ENCODE measurements at regions of chr7 and their contacts with region 1.

Region 1: DNA sequence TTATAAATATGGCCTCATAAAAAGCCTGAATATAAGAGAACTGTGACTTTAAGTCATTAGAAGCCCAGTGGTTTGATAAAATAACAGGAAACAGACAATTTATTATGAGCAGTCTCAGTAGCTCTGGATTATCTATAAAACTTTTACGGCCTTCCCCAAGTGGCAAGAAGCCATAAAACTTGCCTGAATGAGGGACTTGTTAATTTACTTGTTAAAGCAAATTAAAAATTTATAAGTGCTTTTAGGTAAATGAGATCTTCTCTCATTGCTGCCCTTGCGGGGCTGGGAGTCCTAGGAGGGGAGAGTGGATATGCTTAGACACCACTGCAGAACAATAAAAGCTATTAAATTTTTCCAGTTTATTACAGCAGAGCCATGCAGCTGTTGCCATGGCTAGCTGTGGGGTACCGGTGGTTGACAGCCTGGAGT is 499.9 kb downstream of the AUTS2 start:
- DNase-seq: no peak
- ATAC-seq: no peak
- H3K4me3 ChIP-seq: no peak overlapping the region
- H3K27ac ChIP-seq: no peak overlapping the region
- H3K4me1 ChIP-seq: no peaks in the 10 kb centered on the region
- H3K27me3 ChIP-seq: no peaks in the 10 kb centered on the region
- CTCF ChIP-seq: no peak
- POLR2A ChIP-seq: no peak
- RAD21 ChIP-seq: no peak

Region 2: GRCh38 chr7:70165477-70166170 is 67.5 kb after region 1 on chr7:
- CTCF ChIA-PET with region 1: no interaction called
- POLR2A ChIA-PET with region 1: interaction called, 17 read pairs
- dilution Hi-C with region 1: no loop called
- in situ Hi-C with region 1: no loop called
- intact Hi-C with region 1: no loop called
- DNase-seq: no peak
- ATAC-seq: no peak
- H3K4me3 ChIP-seq: no peak overlapping the region
- H3K27ac ChIP-seq: no peak overlapping the region
- H3K4me1 ChIP-seq: no peaks in the 10 kb centered on the region
- H3K27me3 ChIP-seq: no peaks in the 10 kb centered on the region
- CTCF ChIP-seq: no peak
- POLR2A ChIP-seq: no peak
- RAD21 ChIP-seq: no peak

Region 3: GRCh38 chr7:70392256-70392876 is 294.2 kb after region 1 on chr7:
- CTCF ChIA-PET with region 1: no interaction called
- POLR2A ChIA-PET with region 1: no interaction called
- dilution Hi-C with region 1: no loop called
- in situ Hi-C with region 1: no loop called
- intact Hi-C with region 1: no loop called
- DNase-seq: no peak
- ATAC-seq: no peak
- H3K4me3 ChIP-seq: no peak overlapping the region
- H3K27ac ChIP-seq: no peak overlapping the region
- H3K4me1 ChIP-seq: no peaks in the 10 kb centered on the region
- H3K27me3 ChIP-seq: no peaks in the 10 kb centered on the region
- CTCF ChIP-seq: no peak
- POLR2A ChIP-seq: no peak
- RAD21 ChIP-seq: no peak